Calu3 (cell line): ENCODE measurements at regions of chr2 and their contacts with region 1.

Region 1: DNA sequence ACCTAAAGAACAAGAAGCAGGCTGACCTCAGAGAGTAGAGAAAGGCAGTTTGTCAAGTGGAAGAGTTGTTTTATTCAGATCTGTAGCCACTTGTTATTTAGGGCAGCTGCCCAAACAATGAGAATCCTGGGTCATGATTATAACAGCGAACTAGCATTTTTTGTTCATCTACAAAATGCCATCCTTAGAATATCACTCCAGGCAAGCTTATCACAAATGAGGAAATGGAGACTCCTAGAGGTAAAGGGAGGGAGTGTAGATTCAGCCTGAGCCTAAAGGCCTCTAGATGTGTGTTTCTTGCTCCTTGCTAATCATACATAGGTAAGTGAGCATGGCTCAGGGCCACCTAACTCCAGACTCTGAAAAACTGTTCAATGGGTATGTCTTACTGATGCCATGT is 126.1 kb downstream of the HNMT start:
- DNase-seq: peak; percentile 50
- H3K4me3 Mint-ChIP-seq: no peak overlapping the region
- H3K27ac Mint-ChIP-seq: no peak overlapping the region
- H3K4me1 Mint-ChIP-seq: peaks cover 6% of the 10 kb centered on the region
- H3K27me3 Mint-ChIP-seq: no peaks in the 10 kb centered on the region
- CTCF ChIP-seq: peak; percentile 36

Region 2: DNA sequence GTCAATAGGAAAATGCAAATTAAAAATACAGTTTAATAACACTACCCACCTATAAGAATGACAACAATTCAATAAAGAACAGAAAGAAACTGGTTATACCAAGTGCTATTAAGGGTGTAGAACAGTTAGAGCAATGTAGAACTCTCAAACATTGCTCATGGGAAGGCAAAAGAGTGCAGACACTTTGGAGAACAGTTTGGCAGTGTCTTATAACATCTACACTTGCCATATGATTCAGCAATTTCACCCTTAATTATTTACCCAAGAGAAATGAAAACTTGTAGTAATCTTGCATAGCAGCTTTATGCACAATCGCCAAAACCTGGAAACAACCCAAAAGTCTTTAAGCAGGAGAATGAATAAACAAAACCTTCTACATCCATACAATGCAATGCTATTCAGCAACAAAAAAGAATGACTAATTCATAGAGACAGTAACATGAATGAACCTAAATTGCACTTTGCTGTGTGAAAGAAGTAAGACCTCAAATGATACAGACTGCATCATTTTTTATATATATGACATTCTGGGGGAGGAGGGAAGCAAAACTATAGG is 869.8 kb before region 1 on chr2:
- CTCF ChIA-PET with region 1: no interaction called
- intact Hi-C with region 1: no loop called
- DNase-seq: peak; percentile 9
- H3K4me3 Mint-ChIP-seq: no peak overlapping the region
- H3K27ac Mint-ChIP-seq: no peak overlapping the region
- H3K4me1 Mint-ChIP-seq: peaks cover 14% of the 10 kb centered on the region
- H3K27me3 Mint-ChIP-seq: no peaks in the 10 kb centered on the region
- CTCF ChIP-seq: no peak

Region 3: DNA sequence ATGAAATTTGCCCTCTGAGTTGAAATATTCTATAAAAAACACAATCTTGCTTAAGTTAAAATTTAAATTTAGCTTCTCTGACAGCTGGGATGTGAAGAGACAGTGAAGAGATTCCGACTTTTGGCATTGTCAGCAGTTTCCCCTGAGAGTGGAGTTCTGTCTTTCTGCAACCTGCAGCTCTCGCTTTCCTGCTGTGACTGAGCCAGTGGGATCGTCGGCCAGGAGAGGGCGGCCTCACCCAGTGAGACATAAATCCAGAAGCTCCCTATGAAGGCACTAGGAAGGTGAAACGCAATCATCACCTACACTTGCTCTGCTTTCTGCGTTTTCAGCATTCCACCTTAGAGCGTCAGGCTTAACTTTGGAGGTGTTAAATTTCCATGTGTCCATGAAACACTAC is 201.5 kb before region 1 on chr2:
- CTCF ChIA-PET with region 1: interaction called, 10 read pairs
- intact Hi-C with region 1: loop called (anchors 1 kb)
- DNase-seq: peak; percentile 77
- H3K4me3 Mint-ChIP-seq: no peak overlapping the region
- H3K27ac Mint-ChIP-seq: no peak overlapping the region
- H3K4me1 Mint-ChIP-seq: peaks cover 8% of the 10 kb centered on the region
- H3K27me3 Mint-ChIP-seq: no peaks in the 10 kb centered on the region
- CTCF ChIP-seq: peak; percentile 52

Region 4: GRCh38 chr2:137910641-137911040 is 179.7 kb before region 1 on chr2:
- CTCF ChIA-PET with region 1: interaction called, 31 read pairs
- intact Hi-C with region 1: loop called (anchors 1 kb)
- DNase-seq: no peak
- H3K4me3 Mint-ChIP-seq: no peak overlapping the region
- H3K27ac Mint-ChIP-seq: no peak overlapping the region
- H3K4me1 Mint-ChIP-seq: peaks cover 17% of the 10 kb centered on the region
- H3K27me3 Mint-ChIP-seq: no peaks in the 10 kb centered on the region
- CTCF ChIP-seq: peak; percentile 53

Region 5: DNA sequence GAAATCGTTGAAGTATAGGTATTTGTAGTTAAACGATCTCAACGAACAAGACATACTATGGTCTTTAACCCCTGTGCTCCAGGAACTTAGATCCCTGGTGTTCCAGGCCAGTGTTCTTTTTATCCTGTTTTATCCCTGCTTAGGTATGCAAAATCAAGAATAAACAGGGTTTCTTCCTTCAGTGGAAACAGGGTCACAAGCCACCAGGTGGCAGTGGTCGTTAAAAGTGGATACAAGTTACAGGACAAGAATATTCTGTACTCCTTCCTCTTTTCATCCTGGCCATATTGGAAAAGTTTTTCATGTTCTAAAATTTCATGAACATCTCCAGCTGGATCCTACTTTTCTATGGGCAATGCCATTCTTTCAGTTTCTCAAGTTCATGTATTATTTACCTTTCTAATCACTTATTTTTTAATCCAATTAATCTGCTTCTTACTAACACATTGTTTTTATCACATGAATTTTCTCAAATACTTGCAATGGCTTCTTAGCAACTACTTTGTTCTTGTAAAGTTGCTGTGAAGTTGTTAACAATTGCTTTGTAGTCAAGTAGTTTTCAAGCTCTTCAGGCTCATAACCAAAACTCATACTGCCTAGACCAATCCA is 142.5 kb before region 1 on chr2:
- CTCF ChIA-PET with region 1: interaction called, 3 read pairs
- intact Hi-C with region 1: loop called (anchors 1 kb)
- DNase-seq: peak; percentile 77
- H3K4me3 Mint-ChIP-seq: no peak overlapping the region
- H3K27ac Mint-ChIP-seq: peak overlapping the region; percentile 44
- H3K4me1 Mint-ChIP-seq: peaks cover 77% of the 10 kb centered on the region
- H3K27me3 Mint-ChIP-seq: no peaks in the 10 kb centered on the region
- CTCF ChIP-seq: peak; percentile 37

Region 6: DNA sequence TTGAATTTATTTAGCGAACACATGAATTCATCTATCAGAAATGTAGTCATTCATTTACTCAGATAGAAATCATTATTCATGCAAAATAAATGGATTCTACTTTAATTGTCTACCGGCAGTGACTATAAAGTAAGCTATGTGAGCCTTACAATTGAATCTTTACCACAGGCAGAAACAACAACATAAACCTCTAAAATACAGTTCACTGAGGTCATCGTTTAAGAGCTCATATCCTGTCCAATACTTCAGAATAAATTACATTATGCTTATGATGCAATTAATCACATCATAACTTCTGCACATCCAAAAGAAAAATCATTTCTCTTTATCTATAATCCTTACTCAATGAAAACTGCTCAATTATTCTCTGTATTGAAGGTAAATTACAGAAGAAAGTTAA is 118.7 kb after region 1 on chr2:
- CTCF ChIA-PET with region 1: no interaction called
- intact Hi-C with region 1: no loop called
- DNase-seq: no peak
- H3K4me3 Mint-ChIP-seq: no peak overlapping the region
- H3K27ac Mint-ChIP-seq: no peak overlapping the region
- H3K4me1 Mint-ChIP-seq: no peaks in the 10 kb centered on the region
- H3K27me3 Mint-ChIP-seq: no peaks in the 10 kb centered on the region
- CTCF ChIP-seq: no peak

Region 7: GRCh38 chr2:138787053-138787666 is 696.8 kb after region 1 on chr2:
- CTCF ChIA-PET with region 1: interaction called, 3 read pairs
- intact Hi-C with region 1: loop called (anchors 5 kb)
- DNase-seq: peak; percentile 34
- H3K4me3 Mint-ChIP-seq: no peak overlapping the region
- H3K27ac Mint-ChIP-seq: no peak overlapping the region
- H3K4me1 Mint-ChIP-seq: peaks cover 7% of the 10 kb centered on the region
- H3K27me3 Mint-ChIP-seq: peaks cover 9% of the 10 kb centered on the region
- CTCF ChIP-seq: peak; percentile 71